ENCODE measurements at regions of chr6 and their contacts with region 1.

Region 1: DNA sequence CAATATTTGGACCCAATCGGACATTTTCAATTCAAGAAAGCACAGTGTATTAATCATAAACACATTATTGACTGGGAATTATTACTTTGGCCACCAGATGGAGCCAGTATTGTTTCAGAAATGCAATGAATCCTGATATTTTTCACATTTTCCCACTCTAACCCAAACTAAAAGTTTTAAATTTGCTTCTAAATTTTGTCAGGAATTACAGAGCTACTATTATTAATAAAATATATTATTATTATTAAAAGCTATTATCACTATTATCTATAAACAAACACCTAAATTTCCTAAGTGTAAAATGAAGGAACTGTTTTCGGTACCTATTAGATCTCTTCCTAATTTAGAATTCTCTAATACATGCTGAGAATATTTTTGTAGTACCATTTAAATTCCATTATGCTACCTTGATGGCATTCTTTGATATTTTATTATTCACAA is 245.3 kb downstream of the OGFRL1 start:
- DNase-seq: no peak

Region 2: DNA sequence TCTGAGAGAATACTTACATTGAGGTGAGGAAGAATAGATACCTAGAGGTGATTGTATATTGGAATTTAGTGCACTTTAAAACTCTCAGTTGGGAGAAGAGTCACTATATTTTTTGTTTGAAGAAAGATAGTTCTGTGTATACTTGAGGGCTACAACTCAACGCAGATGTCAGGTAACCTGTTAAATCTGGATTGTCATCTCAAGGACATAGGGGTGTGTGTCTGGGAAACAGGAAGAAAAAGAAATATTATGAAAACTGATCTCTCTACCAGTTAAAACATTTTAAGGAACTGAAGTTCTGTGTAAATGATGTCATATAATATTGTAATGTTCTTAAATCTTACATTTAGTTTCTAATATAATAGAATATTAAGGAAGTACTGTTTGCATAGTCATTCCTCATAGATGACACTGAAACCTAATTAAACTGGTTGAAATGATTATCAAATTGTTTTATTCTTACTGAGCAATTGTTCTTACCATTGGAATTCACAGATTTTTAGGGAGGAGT is 780.0 kb before region 1 on chr6:
- intact Hi-C with region 1: no loop called
- DNase-seq: no peak

Region 3: GRCh38 chr6:72042088-72042487 is 508.1 kb after region 1 on chr6:
- intact Hi-C with region 1: loop called (anchors 5 kb)
- DNase-seq: no peak

Region 4: GRCh38 chr6:72084992-72085569 is 551.1 kb after region 1 on chr6:
- intact Hi-C with region 1: loop called (anchors 2 kb)
- DNase-seq: no peak

Measured in posterior cingulate gyrus (tissue), 11 donors.